CD4-positive, alpha-beta T cell (primary cell): ENCODE measurements at regions of chr20 and their contacts with region 1.

Region 1: DNA sequence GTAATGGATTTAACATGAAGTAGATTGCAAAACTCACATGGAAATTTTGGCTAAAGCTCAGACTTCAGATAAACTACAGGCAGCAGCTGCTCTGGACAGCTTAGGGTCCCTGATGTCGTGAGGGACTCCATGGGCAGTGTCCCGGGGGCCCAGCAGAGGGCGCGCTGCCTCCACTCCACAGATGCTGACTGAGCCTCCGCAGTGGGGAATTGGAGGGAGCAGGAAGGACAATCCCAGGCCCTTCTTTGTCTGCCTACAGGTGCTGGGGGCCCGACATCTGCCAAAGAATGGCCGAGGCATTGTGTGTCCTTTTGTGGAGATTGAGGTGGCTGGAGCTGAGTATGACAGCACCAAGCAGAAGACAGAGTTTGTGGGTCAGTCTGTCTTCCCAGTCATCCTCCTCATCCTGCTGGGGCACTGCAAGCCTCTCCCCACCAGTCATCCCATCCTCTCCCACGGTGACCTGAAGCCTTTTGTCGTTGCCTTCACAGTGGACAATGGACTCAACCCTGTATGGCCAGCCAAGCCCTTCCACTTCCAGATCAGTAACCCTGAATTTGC is 35.9 kb downstream of the PLCG1 start:
- DNase-seq: peak; percentile 49 to 81 (median 62)
- ATAC-seq: peak; percentile 89
- H3K4me3 ChIP-seq: no peak overlapping the region
- H3K4me3 Mint-ChIP-seq: no peak overlapping the region
- H3K27ac ChIP-seq: no peak overlapping the region
- H3K27ac Mint-ChIP-seq: peak overlapping the region; percentile 67
- H3K4me1 ChIP-seq: peaks cover 17% of the 10 kb centered on the region
- H3K4me1 Mint-ChIP-seq: peaks cover 15% of the 10 kb centered on the region
- H3K27me3 ChIP-seq: no peaks in the 10 kb centered on the region
- H3K27me3 Mint-ChIP-seq: no peaks in the 10 kb centered on the region
- CTCF ChIP-seq: peak; percentile 92

Region 2: DNA sequence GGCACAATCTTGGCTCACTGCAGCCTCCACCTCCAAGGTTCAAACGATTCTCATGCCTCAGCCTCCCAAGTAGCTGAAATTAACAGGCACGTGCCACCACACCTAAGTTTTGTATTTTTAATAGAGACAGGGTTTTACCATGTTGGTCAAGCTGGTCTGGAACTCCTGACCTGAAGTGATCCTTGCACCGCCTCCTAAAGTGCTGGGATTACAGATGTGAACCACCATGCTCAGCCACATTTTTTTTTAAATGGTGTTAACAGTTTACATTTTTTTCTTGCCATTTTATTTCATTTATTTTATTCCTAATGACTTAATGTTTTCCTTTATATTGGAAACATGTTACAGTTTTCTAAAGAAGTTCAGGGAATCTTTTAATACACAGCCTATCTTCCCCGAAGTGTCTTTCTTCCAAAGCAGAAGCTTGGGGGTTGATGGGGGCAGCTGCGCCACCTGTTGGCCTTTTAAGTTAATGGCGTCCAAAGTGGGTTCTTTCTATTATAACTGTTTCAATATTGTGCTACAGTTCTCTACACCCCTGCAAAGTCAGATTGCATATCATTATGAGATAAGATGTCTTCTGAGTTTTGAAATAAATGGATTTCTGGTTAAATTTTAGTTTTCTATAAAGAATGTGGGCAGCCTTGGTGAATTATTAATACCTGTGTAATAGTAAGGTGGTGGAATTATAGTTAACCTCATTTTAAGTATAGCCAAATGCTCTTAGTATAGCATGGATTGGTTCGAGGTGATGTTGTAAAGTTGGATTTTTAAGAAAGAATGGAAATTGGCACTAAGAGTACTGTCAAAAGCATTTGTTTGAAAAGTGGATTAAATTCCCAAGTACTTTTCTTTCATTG is 77.9 kb before region 1 on chr20:
- CTCF ChIA-PET with region 1: no interaction called
- POLR2A ChIA-PET with region 1: no interaction called
- intact Hi-C with region 1: no loop called
- DNase-seq: peak; percentile 22 to 82 (median 46)
- ATAC-seq: peak; percentile 75
- H3K4me3 ChIP-seq: no peak overlapping the region
- H3K4me3 Mint-ChIP-seq: no peak overlapping the region
- H3K27ac ChIP-seq: no peak overlapping the region
- H3K27ac Mint-ChIP-seq: peak overlapping the region; percentile 4
- H3K4me1 ChIP-seq: no peaks in the 10 kb centered on the region
- H3K4me1 Mint-ChIP-seq: peaks cover 6% of the 10 kb centered on the region
- H3K27me3 ChIP-seq: no peaks in the 10 kb centered on the region
- H3K27me3 Mint-ChIP-seq: no peaks in the 10 kb centered on the region
- CTCF ChIP-seq: peak; percentile 98

Region 3: GRCh38 chr20:41119546-41120235 is 53.5 kb before region 1 on chr20:
- CTCF ChIA-PET with region 1: no interaction called
- POLR2A ChIA-PET with region 1: no interaction called
- intact Hi-C with region 1: no loop called
- DNase-seq: no peak
- ATAC-seq: no peak
- H3K4me3 ChIP-seq: no peak overlapping the region
- H3K4me3 Mint-ChIP-seq: no peak overlapping the region
- H3K27ac ChIP-seq: no peak overlapping the region
- H3K27ac Mint-ChIP-seq: peak overlapping the region; percentile 22
- H3K4me1 ChIP-seq: peaks cover 5% of the 10 kb centered on the region
- H3K4me1 Mint-ChIP-seq: peaks cover 7% of the 10 kb centered on the region
- H3K27me3 ChIP-seq: no peaks in the 10 kb centered on the region
- H3K27me3 Mint-ChIP-seq: no peaks in the 10 kb centered on the region
- CTCF ChIP-seq: no peak

Region 4: GRCh38 chr20:41161886-41162285 is 11.4 kb before region 1 on chr20:
- CTCF ChIA-PET with region 1: interaction called, 22 read pairs
- POLR2A ChIA-PET with region 1: interaction called, 22 read pairs
- intact Hi-C with region 1: no loop called
- DNase-seq: peak in 3 of 14 experiments; percentile 42 to 61 (median 44)
- ATAC-seq: no peak
- H3K4me3 ChIP-seq: no peak overlapping the region
- H3K4me3 Mint-ChIP-seq: peak overlapping the region; percentile 70
- H3K27ac ChIP-seq: peak overlapping the region; percentile 78 to 85
- H3K27ac Mint-ChIP-seq: peak overlapping the region; percentile 96
- H3K4me1 ChIP-seq: peaks cover 89% of the 10 kb centered on the region
- H3K4me1 Mint-ChIP-seq: peaks cover 77% of the 10 kb centered on the region
- H3K27me3 ChIP-seq: no peaks in the 10 kb centered on the region
- H3K27me3 Mint-ChIP-seq: no peaks in the 10 kb centered on the region
- CTCF ChIP-seq: no peak